ENCODE measurements at regions of chr1 and their contacts with region 1.

Region 1: DNA sequence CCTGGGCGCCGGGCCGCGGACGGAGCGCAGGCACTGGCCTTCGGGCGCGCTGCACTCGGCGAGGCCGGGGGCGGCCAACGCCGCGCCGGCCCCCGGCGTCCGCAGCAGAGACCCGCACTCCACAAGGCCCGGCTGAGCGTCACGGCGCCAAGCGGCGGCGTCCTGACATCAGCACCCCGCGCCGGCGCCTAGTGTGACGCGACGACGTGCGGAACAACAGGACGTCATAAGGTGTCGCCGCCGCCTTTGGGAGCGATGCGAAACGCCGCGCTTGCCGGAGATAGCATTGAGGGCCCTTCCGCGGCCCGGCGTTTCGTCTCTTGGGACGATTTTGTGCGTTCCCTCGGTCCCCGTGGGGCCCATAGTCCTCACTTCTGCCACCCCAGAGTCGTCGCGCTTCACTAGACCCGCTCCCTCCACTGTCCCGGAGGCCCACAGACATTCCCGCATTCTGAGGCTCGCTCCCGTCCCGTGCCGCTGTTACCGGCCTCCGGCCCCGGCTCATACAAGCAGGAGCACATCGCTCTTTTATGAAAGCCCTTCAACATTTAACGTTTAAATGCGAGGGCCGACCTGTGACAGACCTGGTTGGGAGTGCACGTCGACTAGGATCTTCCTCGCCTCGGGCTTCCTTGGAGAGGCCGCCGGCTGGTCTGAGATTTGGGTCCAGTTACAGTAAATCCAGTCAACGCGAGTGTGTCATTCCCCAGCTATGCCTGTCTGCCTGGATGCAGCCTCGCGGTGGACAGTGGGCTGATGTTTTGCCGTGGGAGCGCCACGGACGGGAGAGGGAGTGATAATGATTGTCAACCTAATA is at the start of gene SSU72:
- DNase-seq: peak; percentile 91
- H3K4me3 Mint-ChIP-seq: peak within 1 kb of the TSS; percentile 100
- H3K27ac Mint-ChIP-seq: peak within 1 kb of the TSS; percentile 100
- H3K4me1 Mint-ChIP-seq: peaks cover 20% of the 10 kb centered on the region
- H3K27me3 Mint-ChIP-seq: peaks cover 2% of the 10 kb centered on the region
- total RNA-seq, gene SSU72: 121 and 123 TPM in 2 replicates

Region 2: GRCh38 chr1:1318131-1318652 is 256.7 kb before region 1 on chr1:
- intact Hi-C with region 1: no loop called
- DNase-seq: no peak
- H3K4me3 Mint-ChIP-seq: no peak overlapping the region
- H3K27ac Mint-ChIP-seq: no peak overlapping the region
- H3K4me1 Mint-ChIP-seq: peaks cover 7% of the 10 kb centered on the region
- H3K27me3 Mint-ChIP-seq: no peaks in the 10 kb centered on the region

Region 3: DNA sequence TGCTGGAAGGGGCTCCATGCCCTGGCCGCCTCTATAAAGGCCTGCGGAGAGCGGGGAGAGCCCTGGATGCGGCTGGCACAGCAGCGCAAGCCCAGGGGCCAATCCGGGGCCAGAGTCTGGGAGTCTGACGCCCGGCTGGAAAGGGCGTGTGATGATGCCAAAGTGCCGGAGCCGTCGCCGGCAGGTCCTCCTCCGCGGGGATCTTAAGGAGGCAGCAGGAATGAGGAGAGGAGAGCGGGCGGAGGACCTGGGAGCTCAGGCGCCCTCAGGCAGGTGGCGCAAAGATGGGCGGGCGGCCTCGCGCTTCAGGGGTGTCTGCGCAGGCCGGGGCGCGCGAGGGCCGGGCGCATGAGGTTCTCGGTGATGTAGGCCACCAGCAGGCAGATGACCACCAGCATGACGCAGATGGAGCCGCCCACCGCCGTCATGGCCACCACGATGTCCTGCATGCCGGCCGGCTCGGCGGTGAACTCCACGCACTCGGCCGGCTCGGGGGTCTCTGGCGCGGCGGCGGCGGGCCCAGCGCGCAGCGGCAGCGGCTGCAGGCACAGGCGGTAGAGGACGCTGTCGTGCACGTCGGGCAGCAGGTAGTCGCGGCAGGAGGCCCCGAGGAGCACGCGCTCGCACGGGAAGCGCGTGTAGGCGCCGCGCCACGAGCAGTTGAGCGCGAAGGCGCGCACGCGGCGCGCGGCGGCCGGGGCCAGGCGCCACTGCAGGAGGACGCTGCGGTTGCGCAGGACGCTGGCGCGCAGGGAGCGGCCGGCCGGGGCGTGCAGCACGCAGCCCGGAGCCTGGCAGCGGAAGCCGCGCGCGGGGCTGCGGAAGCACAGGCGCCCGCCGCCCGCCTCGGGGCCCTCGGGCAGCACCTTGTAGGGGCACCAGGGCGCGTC is 24.3 kb after region 1 on chr1:
- intact Hi-C with region 1: no loop called
- DNase-seq: peak; percentile 37
- H3K4me3 Mint-ChIP-seq: peak overlapping the region; percentile 78
- H3K27ac Mint-ChIP-seq: no peak overlapping the region
- H3K4me1 Mint-ChIP-seq: peaks cover 2% of the 10 kb centered on the region
- H3K27me3 Mint-ChIP-seq: peaks cover 5% of the 10 kb centered on the region

Region 4: GRCh38 chr1:1615256-1616044 is 40.5 kb after region 1 on chr1 and contains the start of gene MIB2:
- intact Hi-C with region 1: loop called (anchors 2 kb)
- DNase-seq: peak; percentile 98
- H3K4me3 Mint-ChIP-seq: peak within 1 kb of the TSS; percentile 96
- H3K27ac Mint-ChIP-seq: peak within 1 kb of the TSS; percentile 97
- H3K4me1 Mint-ChIP-seq: peaks cover 25% of the 10 kb centered on the region
- H3K27me3 Mint-ChIP-seq: no peaks in the 10 kb centered on the region
- total RNA-seq, gene MIB2: 30.2 and 32.7 TPM in 2 replicates

Region 5: DNA sequence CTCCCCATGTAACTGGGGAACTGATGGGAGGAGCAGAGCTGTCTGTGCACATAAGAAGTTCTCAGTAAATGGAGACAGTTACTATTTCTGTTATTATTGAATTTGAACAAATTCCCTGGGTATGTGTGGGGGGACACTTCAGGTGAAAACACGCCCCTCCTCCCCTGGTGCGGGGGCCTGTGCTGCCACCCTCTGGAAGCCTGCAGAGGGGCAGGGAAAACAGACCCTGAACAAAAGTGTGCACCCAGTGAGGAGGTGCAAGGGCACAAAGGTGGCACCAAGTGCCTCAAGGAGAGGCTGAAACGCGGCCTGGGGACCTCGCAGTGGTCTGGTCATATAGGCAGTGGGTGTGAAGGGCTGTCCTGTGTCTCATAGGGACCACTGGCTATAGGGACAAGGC is 221.5 kb after region 1 on chr1:
- intact Hi-C with region 1: no loop called
- DNase-seq: no peak
- H3K4me3 Mint-ChIP-seq: no peak overlapping the region
- H3K27ac Mint-ChIP-seq: no peak overlapping the region
- H3K4me1 Mint-ChIP-seq: peaks cover 3% of the 10 kb centered on the region
- H3K27me3 Mint-ChIP-seq: no peaks in the 10 kb centered on the region

Measured in activated T-helper 2 cell treated with anti-CD3 and anti-CD28 coated beads, Interferon-gamma antibody, Interleukin-2, Interleukin-4, amounts not matched to agents 10 μg/mL and 5 μg/mL and 100 μg/mL, durations not matched to agents 14 hours and 24 hours and 36 hours (primary cell).